PC-3 (cell line): ENCODE measurements at regions of chr20 and their contacts with region 1.

Region 1: DNA sequence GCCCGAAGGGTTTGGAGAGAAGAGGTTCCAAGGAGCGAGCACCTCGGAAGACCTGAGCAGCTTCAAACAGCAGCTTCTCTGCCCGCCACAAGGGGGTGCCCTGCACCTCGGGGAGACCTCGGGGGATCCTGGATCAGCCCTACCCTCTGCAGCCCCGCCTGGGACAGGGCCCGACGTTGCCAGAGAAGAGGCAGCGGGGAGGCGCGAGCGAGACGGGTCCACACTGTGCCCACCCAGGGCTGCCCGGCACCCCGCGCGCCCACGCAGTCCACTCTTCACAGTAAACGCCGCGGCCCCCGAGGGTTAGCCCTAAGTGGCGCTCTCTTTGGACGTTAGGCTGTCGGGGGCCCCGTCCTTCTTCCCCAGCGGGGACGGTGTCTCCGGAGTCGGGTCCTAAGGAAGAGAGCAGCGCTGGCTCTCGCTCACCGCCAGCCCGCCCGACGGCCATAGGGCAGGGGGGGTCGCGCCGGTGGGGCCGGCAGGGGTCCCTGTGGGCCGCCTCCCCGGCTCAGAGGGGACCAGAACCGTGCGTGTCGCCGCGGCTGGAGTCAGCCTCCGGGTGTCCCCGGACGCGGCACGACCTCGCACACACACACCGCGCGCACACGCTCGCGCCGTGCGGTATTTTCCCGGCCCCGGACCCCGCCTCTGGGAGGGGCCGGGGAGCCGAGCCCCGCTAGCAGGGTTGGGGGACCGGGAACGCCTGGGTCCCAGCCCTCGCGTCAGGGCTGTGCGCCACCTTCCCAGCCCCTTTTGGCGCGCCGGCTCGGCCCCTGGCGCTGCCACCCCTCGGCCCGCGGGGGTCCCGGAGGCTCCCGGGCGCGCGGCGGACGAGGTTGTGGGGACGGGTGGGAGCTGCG is 929 bp downstream of the CDH22 start:
- DNase-seq: peak; percentile 59
- ATAC-seq: peak; percentile 74
- H3K4me3 ChIP-seq: no peak overlapping the region
- H3K27ac ChIP-seq: no peak overlapping the region
- H3K4me1 ChIP-seq: no peaks in the 10 kb centered on the region
- H3K27me3 ChIP-seq: peaks cover 79% of the 10 kb centered on the region
- CTCF ChIP-seq: peak; percentile 89

Region 2: DNA sequence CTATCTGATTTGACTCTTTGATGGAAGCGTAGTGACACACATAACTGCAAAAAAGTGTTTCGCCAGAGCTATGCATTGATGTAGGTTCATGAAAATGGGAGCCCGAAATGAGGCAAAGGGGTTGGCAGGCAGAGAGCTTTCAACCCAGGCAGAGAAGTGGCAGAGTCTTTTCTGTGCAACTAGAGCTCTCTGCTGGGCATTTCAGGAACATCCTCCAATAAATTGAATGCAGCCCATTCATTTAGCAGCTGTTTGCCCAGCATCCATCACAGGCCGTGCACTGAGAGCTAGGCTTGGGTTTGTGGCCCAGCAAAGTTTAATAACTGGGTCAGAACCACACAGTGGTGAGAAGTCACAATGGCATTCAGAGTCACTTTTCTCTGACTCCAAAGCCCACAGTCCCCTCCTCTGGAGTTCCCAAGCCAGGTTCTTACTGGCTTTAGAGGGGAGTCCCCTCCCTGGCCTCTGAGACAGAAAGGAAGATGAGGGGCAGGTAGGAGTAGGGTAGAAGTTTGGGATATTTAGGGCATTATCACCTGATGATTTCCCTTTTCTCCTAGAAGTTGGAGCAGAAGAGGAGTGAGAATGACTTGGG is 130.9 kb after region 1 on chr20:
- CTCF ChIA-PET with region 1: interaction called, 11 read pairs
- POLR2A ChIA-PET with region 1: no interaction called
- intact Hi-C with region 1: no loop called
- DNase-seq: peak; percentile 73
- ATAC-seq: peak; percentile 92
- H3K4me3 ChIP-seq: no peak overlapping the region
- H3K27ac ChIP-seq: no peak overlapping the region
- H3K4me1 ChIP-seq: peaks cover 6% of the 10 kb centered on the region; the same call in 1 of the 2 replicates
- H3K27me3 ChIP-seq: peaks cover 48% of the 10 kb centered on the region
- CTCF ChIP-seq: peak; percentile 80